A549 (cell line): ENCODE measurements at regions of chr6 and their contacts with region 1.

Region 1: GRCh38 chr6:3748208-3749066 is 3.1 kb downstream of the PXDC1 start:
- DNase-seq: peak; percentile 75 to 86
- ATAC-seq: peak; percentile 74 to 83
- H3K4me3 ChIP-seq: no peak overlapping the region
- H3K27ac ChIP-seq: peak overlapping the region; percentile 41 to 53; a peak in 2 of 6 replicates
- H3K4me1 ChIP-seq: peaks cover 39% of the 10 kb centered on the region
- CTCF ChIP-seq: peak; percentile 69
- EP300 ChIP-seq: no peak
- POLR2A ChIP-seq: no peak
- RAD21 ChIP-seq: peak; percentile 66 to 72

Region 2: GRCh38 chr6:3775847-3776246 is 27.4 kb after region 1 on chr6:
- CTCF ChIA-PET with region 1: interaction called, 12 read pairs
- POLR2A ChIA-PET with region 1: no interaction called
- DNase-seq: no peak
- ATAC-seq: no peak
- H3K4me3 ChIP-seq: no peak overlapping the region
- H3K27ac ChIP-seq: no peak overlapping the region
- H3K4me1 ChIP-seq: no peaks in the 10 kb centered on the region
- CTCF ChIP-seq: no peak
- EP300 ChIP-seq: no peak
- POLR2A ChIP-seq: no peak
- RAD21 ChIP-seq: no peak

Region 3: DNA sequence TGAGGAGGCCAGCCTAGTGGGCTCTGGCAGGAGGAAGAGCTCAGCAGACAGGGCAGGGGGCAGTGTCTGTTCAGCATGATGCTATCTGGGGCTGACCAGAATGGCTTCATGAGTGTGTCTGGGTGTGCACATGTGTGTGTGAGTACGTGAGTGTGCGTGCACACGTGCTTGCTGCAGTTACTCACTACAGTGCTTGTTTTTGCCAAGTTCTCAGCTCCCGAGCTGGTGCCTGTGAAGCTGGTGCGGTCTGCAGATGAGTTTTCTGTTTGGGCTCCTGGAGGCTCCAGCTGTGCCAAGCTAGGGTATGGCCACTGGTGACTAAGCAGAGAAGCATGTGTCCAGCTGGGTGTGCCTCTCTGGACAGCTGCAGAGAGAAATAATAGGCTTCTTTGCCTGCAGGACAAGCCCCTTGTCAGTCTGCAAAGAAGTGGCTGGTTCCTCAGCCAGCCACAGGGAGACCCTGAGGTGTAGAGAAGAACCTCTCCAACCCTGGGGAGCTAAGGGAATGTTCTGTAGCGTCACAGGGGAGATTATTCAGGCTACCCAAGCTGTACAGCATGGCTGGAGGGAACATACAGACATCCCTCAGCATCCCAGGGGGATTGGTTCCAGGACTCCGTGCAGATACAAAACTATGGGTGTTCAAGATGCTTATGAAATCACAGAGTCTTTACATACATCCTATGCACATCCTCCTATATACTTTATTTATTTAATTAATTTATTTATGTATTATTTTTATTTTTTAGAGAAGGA is 60.5 kb after region 1 on chr6:
- CTCF ChIA-PET with region 1: interaction called, 11 read pairs
- POLR2A ChIA-PET with region 1: interaction called, 6 read pairs
- DNase-seq: peak; percentile 77 to 85
- ATAC-seq: peak; percentile 95
- H3K4me3 ChIP-seq: no peak overlapping the region
- H3K27ac ChIP-seq: peak overlapping the region; percentile 78 to 82
- H3K4me1 ChIP-seq: peaks cover 52% of the 10 kb centered on the region
- CTCF ChIP-seq: no peak
- EP300 ChIP-seq: no peak
- POLR2A ChIP-seq: no peak
- RAD21 ChIP-seq: no peak

Region 4: GRCh38 chr6:3887150-3887700 is 138.8 kb after region 1 on chr6:
- CTCF ChIA-PET with region 1: interaction called, 25 read pairs
- POLR2A ChIA-PET with region 1: no interaction called
- DNase-seq: peak in 1 of 2 experiments; percentile 23
- ATAC-seq: peak in 1 of 2 experiments; percentile 10; a peak in 2 of 6 replicates
- H3K4me3 ChIP-seq: no peak overlapping the region
- H3K27ac ChIP-seq: peak overlapping the region; percentile 74 to 86
- H3K4me1 ChIP-seq: peaks cover 54% of the 10 kb centered on the region
- CTCF ChIP-seq: peak; percentile 49
- EP300 ChIP-seq: no peak
- POLR2A ChIP-seq: no peak
- RAD21 ChIP-seq: peak; percentile 61 to 66

Region 5: DNA sequence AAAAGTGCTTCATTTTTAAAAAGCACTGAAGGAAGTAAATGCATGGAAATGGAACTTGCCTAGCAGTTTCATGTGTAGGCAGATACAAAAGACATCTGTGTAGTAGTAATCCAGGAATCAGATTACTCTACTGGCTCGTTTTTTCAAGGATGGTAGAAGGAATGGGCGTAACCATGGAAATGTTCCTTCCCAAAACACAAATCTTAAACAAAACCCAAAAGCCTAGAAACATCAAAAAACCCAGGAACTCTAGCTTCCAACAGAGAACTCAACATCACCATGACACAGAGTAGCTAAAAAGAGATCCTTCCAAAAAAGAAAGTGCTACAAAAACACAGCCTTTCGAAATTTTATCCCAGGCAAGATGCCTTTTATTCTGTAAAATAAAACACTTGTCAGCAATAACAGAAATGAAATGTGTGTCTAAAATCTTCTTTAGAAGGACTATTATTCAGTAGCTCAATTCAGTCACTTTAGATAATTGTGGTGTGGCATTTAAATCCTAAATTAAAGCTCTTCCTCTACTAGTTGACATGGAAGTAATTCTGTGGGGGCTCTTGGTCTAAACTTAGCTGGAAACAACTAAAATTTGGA is 248.8 kb after region 1 on chr6:
- CTCF ChIA-PET with region 1: interaction called, 10 read pairs
- POLR2A ChIA-PET with region 1: no interaction called
- DNase-seq: no peak
- ATAC-seq: no peak
- H3K4me3 ChIP-seq: no peak overlapping the region
- H3K27ac ChIP-seq: no peak overlapping the region
- H3K4me1 ChIP-seq: no peaks in the 10 kb centered on the region
- CTCF ChIP-seq: no peak
- EP300 ChIP-seq: no peak
- POLR2A ChIP-seq: no peak
- RAD21 ChIP-seq: no peak